ENCODE measurements at regions of chr12 and their contacts with region 1.

Region 1: DNA sequence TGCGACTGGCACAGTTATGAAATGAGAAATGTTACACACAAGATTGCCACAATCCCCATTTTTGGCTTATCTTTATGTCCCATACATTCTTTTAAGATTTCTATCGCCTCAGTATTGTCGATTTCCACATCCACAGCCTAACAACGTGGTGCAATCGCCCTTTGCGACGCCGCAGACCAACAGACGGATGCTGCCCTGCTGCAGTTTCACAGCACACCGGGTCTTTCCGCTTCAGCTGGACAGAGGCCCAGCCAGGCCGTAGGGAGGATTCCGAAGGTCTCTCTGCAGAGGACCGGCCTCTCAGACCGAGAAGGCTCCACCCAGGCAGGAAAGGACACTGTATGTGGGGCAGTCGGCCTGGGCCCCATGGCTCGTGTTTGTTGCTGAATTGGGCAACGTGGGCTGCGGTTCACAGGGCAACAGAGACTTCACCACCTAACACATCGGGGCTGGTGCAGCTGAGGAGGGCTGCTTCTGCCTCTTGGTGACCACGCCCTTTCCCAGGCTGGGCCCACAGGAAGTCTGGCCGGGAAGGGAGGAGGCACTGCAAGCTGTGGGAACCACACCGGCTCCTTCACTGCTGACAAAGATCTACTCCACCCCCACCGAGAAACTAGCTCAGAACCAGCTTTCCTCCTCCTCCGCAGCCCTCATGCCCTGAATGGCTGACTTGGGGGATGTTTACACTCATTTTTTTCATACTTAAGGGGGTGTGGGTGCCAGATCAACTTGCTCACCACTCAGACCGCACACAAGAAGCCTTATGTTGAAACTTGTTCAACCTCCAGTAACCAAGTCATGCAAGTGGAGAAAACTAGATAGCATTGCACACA is 32.9 kb upstream of the MDM1 start:
- DNase-seq: peak; percentile 46 to 95 (median 74)
- ATAC-seq: peak; percentile 90
- H3K4me3 ChIP-seq: peak overlapping the region; percentile 49
- H3K4me3 Mint-ChIP-seq: peak overlapping the region; percentile 88
- H3K27ac ChIP-seq: peak overlapping the region; percentile 64 to 79
- H3K27ac Mint-ChIP-seq: peak overlapping the region; percentile 93
- H3K4me1 ChIP-seq: peaks cover 52% of the 10 kb centered on the region
- H3K4me1 Mint-ChIP-seq: peaks cover 75% of the 10 kb centered on the region
- H3K27me3 ChIP-seq: no peaks in the 10 kb centered on the region
- H3K27me3 Mint-ChIP-seq: no peaks in the 10 kb centered on the region
- CTCF ChIP-seq: no peak

Region 2: GRCh38 chr12:68446893-68447796 is 82.0 kb after region 1 on chr12:
- CTCF ChIA-PET with region 1: no interaction called
- POLR2A ChIA-PET with region 1: interaction called, 5 read pairs
- intact Hi-C with region 1: loop called in 1 of 2 experiments (anchors 5 kb)
- DNase-seq: no peak
- ATAC-seq: no peak
- H3K4me3 ChIP-seq: no peak overlapping the region
- H3K4me3 Mint-ChIP-seq: no peak overlapping the region
- H3K27ac ChIP-seq: no peak overlapping the region
- H3K27ac Mint-ChIP-seq: peak overlapping the region; percentile 32
- H3K4me1 ChIP-seq: peaks cover 41% of the 10 kb centered on the region
- H3K4me1 Mint-ChIP-seq: peaks cover 78% of the 10 kb centered on the region
- H3K27me3 ChIP-seq: no peaks in the 10 kb centered on the region
- H3K27me3 Mint-ChIP-seq: no peaks in the 10 kb centered on the region
- CTCF ChIP-seq: no peak

Region 3: GRCh38 chr12:68462803-68463202 is 97.7 kb after region 1 on chr12:
- CTCF ChIA-PET with region 1: no interaction called
- POLR2A ChIA-PET with region 1: interaction called, 4 read pairs
- intact Hi-C with region 1: loop called in 1 of 2 experiments (anchors 10 kb)
- DNase-seq: peak in 4 of 14 experiments; percentile 19 to 52 (median 42)
- ATAC-seq: peak; percentile 52
- H3K4me3 ChIP-seq: peak overlapping the region; percentile 55
- H3K4me3 Mint-ChIP-seq: peak overlapping the region; percentile 86
- H3K27ac ChIP-seq: peak overlapping the region in 1 of 2 donors; percentile 57
- H3K27ac Mint-ChIP-seq: peak overlapping the region; percentile 79
- H3K4me1 ChIP-seq: peaks cover 12% of the 10 kb centered on the region
- H3K4me1 Mint-ChIP-seq: peaks cover 20% of the 10 kb centered on the region
- H3K27me3 ChIP-seq: no peaks in the 10 kb centered on the region
- H3K27me3 Mint-ChIP-seq: no peaks in the 10 kb centered on the region
- CTCF ChIP-seq: no peak

Region 4: DNA sequence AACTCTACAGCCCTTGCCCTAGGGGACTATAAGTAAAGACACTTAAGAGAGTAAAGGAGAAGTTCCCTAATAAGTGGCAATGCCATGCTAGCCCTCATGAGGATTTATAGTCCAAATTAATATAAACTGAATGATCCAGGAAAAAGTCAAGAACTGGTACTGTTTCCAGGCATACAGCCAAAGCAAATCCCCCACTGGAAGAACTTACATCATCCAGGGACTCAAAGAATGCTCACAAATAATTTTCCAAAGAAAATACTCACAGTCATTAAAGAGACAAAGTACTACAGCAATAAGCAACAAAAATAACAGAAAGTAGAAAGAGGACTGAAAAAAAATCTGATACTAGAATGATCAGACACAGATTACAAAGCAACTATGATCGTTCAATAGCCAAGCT is 165.9 kb after region 1 on chr12:
- CTCF ChIA-PET with region 1: no interaction called
- POLR2A ChIA-PET with region 1: no interaction called
- intact Hi-C with region 1: no loop called
- DNase-seq: no peak
- ATAC-seq: no peak
- H3K4me3 ChIP-seq: no peak overlapping the region
- H3K4me3 Mint-ChIP-seq: no peak overlapping the region
- H3K27ac ChIP-seq: no peak overlapping the region
- H3K27ac Mint-ChIP-seq: no peak overlapping the region
- H3K4me1 ChIP-seq: no peaks in the 10 kb centered on the region
- H3K4me1 Mint-ChIP-seq: peaks cover 9% of the 10 kb centered on the region
- H3K27me3 ChIP-seq: no peaks in the 10 kb centered on the region
- H3K27me3 Mint-ChIP-seq: no peaks in the 10 kb centered on the region
- CTCF ChIP-seq: no peak